ENCODE measurements at regions of chr17 and their contacts with region 1.

Region 1: DNA sequence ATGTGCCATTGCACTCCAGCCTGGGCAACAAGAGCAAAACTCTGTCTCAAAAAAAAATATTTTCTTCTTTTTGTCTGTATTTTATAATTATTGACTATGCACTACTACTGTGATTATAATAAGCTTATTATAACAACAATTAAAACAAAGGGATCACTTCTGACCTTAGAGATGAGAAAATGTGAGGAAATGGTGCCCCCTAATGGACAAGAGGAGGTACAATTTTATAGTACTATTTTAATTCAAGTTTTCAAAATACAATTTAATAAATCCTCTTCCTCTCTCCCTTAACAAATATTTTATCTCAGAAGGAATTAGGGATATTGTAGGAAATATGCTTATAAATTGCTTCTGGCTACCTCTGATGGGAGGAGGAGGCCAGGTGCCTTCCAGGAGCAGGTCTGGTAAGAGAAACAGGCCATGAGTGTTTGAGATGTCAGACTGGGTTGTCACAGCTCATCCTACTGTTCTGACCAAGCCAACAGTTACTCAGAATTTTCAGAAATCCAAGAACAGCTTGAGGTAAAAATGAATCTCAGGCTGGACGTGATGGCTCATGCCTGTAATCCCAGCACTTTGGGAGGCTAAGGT is 14.0 kb downstream of the VPS53 start:
- DNase-seq: no peak
- H3K4me3 ChIP-seq: no peak overlapping the region
- H3K27me3 ChIP-seq: no peaks in the 10 kb centered on the region
- CTCF ChIP-seq: peak; percentile 43

Region 2: DNA sequence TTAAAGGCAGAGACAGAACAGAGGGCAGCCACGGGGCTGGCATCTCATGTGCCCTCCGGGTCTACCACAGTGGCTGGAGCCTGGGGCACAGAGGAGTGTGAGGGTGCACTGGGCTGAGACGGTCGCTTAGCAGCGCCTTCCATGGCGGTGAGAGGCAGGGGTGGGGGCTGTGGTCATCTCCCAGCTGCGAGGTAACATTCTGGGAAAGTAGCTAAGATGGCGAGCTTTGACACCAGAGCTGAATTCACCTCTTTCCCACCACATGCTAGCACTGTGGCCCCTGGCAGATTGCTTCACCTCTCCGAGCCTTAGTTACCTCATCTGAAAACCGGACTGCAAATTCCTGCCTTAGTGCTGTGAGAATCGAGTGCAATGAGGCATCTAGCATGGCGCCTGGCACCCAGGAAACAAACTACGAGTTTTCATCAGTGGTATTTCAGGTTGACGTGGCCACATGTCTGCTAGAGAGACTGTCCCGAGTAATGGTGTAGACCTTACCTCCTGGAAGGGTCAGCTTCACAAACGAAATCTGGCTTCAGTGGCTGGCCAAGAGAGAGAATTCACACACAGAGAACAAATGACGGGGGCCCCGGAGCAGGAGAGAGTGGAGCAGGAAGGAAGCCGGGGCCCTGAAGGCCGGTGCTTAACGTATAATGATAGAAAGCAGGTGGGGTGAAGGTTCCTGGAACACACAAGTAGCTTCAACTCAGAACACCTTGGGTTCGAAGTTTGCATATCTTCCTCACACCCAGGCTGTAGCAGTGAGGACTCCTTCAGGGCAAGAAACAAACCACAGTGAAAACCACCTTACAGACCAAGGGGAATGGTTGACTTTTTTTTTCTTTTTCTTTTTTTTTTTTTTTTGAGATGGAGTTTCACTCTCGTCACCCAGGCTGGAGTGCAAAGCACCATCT is 284.0 kb before region 1 on chr17:
- CTCF ChIA-PET with region 1: interaction called, 230 read pairs
- POLR2A ChIA-PET with region 1: interaction called, 3 read pairs
- DNase-seq: no peak
- H3K4me3 ChIP-seq: no peak overlapping the region
- H3K27me3 ChIP-seq: no peaks in the 10 kb centered on the region
- CTCF ChIP-seq: no peak

Region 3: DNA sequence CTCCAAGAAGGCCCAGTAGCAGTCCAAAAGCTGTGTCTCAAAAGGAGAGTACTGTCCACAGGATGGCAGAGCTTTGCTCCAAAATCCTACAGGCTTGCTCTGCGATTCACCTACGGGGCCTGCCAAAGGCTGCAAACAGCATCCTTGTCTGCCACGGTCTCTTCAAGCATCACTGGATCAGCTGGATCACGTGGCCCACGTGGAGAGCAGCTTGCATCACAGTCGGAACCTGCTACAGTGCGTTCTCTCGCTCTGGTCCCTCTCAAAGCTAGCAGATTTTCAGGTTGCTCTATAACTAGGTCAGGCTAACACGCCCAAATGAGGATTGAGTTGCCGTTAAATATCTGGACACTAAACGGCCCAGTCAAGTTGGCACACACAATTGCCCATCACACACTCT is 288.0 kb after region 1 on chr17:
- CTCF ChIA-PET with region 1: no interaction called
- POLR2A ChIA-PET with region 1: no interaction called
- DNase-seq: no peak
- H3K4me3 ChIP-seq: no peak overlapping the region
- H3K27me3 ChIP-seq: no peaks in the 10 kb centered on the region
- CTCF ChIP-seq: no peak

Measured in BJ (cell line).